ENCODE measurements at regions of chr11 and their contacts with region 1.

Region 1: GRCh38 chr11:61816736-61817455 is at the start of gene FADS1:
- DNase-seq: peak; percentile 95 to 97 (median 96)
- ATAC-seq: peak; percentile 71
- H3K4me3 ChIP-seq: peak within 1 kb of the TSS; percentile 64
- H3K27ac ChIP-seq: peak within 1 kb of the TSS; percentile 98
- H3K4me1 ChIP-seq: peaks cover 38 to 49% of the 10 kb centered on the region in 2 experiments; a peak in 4 of 5 replicates
- H3K27me3 ChIP-seq: no peaks in the 10 kb centered on the region; a peak in 1 of 5 replicates
- CTCF ChIP-seq: peak; percentile 72 to 93 (median 89)
- EP300 ChIP-seq: peak; percentile 42; the same call in 1 of the 2 replicates
- POLR2A ChIP-seq: no peak; the same call in 1 of the 2 replicates
- RAD21 ChIP-seq: peak; percentile 60; a peak in 3 of 4 replicates
- polyA plus RNA-seq, gene FADS1: 110 to 174 TPM

Region 2: DNA sequence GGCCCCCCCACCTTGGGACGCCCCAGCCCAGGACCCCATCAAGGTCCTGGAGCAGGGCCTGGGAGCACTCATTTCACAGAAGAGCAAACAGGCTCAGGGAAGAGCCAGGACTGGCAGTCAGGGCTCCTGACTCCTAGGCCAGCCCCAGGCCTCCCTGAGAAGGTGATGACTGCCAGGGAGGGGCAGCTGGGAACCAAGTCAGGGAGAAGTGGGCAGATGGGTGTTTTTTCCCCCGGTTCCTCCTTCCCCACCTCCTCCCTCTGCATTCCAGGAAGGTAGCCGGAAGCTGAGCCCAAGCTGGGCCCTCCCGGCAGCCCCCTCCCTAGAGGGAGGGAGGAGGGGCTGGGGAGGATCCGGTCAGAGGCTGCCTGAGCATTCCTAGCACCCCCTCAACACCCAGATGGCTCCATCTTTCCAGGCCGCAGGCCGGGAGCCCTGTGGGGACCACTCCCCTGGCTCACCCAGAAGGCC is 44.9 kb before region 1 on chr11:
- CTCF ChIA-PET with region 1: no interaction called
- POLR2A ChIA-PET with region 1: no interaction called
- in situ Hi-C with region 1: no loop called
- intact Hi-C with region 1: no loop called
- DNase-seq: no peak
- ATAC-seq: no peak
- H3K4me3 ChIP-seq: no peak overlapping the region
- H3K27ac ChIP-seq: no peak overlapping the region
- H3K4me1 ChIP-seq: peaks cover 0 to 66% of the 10 kb centered on the region in 2 experiments; a peak in 2 of 5 replicates
- H3K27me3 ChIP-seq: no peaks in the 10 kb centered on the region
- CTCF ChIP-seq: no peak
- EP300 ChIP-seq: no peak
- POLR2A ChIP-seq: no peak
- RAD21 ChIP-seq: no peak

Region 3: GRCh38 chr11:61803889-61804647 is 12.8 kb before region 1 on chr11:
- CTCF ChIA-PET with region 1: no interaction called
- POLR2A ChIA-PET with region 1: interaction called, 97 read pairs
- in situ Hi-C with region 1: no loop called
- intact Hi-C with region 1: no loop called
- DNase-seq: no peak
- ATAC-seq: no peak
- H3K4me3 ChIP-seq: no peak overlapping the region
- H3K27ac ChIP-seq: no peak overlapping the region
- H3K4me1 ChIP-seq: peaks cover 37 to 53% of the 10 kb centered on the region in 2 experiments
- H3K27me3 ChIP-seq: no peaks in the 10 kb centered on the region
- CTCF ChIP-seq: no peak
- EP300 ChIP-seq: no peak
- POLR2A ChIP-seq: peak; percentile 58
- RAD21 ChIP-seq: no peak

Region 4: GRCh38 chr11:61834278-61835048 is 17.6 kb after region 1 on chr11:
- CTCF ChIA-PET with region 1: no interaction called
- POLR2A ChIA-PET with region 1: interaction called, 10 read pairs
- in situ Hi-C with region 1: no loop called
- intact Hi-C with region 1: loop called (anchors 1 kb)
- DNase-seq: peak; percentile 93 to 98 (median 94)
- ATAC-seq: peak; percentile 97
- H3K4me3 ChIP-seq: 0 out of 2 replicates have a peak overlapping the region, but pooled peaks have one; percentile 4
- H3K27ac ChIP-seq: peak overlapping the region; percentile 100
- H3K4me1 ChIP-seq: peaks cover 51 to 62% of the 10 kb centered on the region in 2 experiments
- H3K27me3 ChIP-seq: no peaks in the 10 kb centered on the region
- CTCF ChIP-seq: no peak
- EP300 ChIP-seq: peak; percentile 95
- POLR2A ChIP-seq: peak; percentile 72
- RAD21 ChIP-seq: peak in 1 of 2 experiments; percentile 18; a peak in 2 of 4 replicates

Region 5: DNA sequence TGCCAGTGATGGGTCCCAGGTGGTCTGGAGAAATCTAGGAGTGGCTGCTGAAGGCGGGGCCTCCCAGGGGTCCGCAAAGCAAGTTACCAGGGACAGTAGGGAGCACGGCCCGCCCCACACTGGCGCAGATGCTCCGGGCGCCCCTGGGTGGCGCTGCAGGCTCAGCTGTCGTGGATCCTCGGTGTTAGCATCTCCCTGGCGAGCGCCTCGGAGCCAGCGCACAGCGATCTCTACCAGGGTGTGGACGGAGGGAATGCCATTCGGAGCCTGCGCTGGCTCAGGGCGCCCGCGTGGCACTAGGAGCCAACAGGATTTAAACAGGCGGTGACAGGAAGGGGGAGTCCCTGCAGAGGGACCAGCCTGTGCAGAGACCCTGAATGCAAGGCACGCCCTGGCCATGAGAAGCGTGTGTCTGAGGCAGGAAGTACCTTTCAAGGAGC is 54.3 kb after region 1 on chr11:
- CTCF ChIA-PET with region 1: interaction called, 3 read pairs
- POLR2A ChIA-PET with region 1: interaction called, 21 read pairs
- in situ Hi-C with region 1: no loop called
- intact Hi-C with region 1: loop called (anchors 2 kb)
- DNase-seq: peak; percentile 88 to 93 (median 90)
- ATAC-seq: peak; percentile 94
- H3K4me3 ChIP-seq: no peak overlapping the region
- H3K27ac ChIP-seq: peak overlapping the region; percentile 85
- H3K4me1 ChIP-seq: peaks cover 43 to 76% of the 10 kb centered on the region in 2 experiments
- H3K27me3 ChIP-seq: no peaks in the 10 kb centered on the region
- CTCF ChIP-seq: peak; percentile 91 to 97 (median 96)
- EP300 ChIP-seq: no peak
- POLR2A ChIP-seq: no peak
- RAD21 ChIP-seq: peak; percentile 93 to 96